Activated T-helper 2 cell treated with anti-CD3 and anti-CD28 coated beads, Interferon-gamma antibody, Interleukin-2, Interleukin-4, amounts not matched to agents 10 μg/mL and 5 μg/mL and 100 μg/mL, durations not matched to agents 14 hours and 24 hours and 36 hours (primary cell): ENCODE measurements at regions of chr6 and their contacts with region 1.

Region 1: GRCh38 chr6:144215932-144216667 is 65.8 kb downstream of the STX11 start:
- DNase-seq: peak; percentile 90
- H3K4me3 Mint-ChIP-seq: peak overlapping the region; percentile 89
- H3K27ac Mint-ChIP-seq: peak overlapping the region; percentile 98
- H3K4me1 Mint-ChIP-seq: peaks cover 28% of the 10 kb centered on the region
- H3K27me3 Mint-ChIP-seq: peaks cover under 1% of the 10 kb centered on the region

Region 2: DNA sequence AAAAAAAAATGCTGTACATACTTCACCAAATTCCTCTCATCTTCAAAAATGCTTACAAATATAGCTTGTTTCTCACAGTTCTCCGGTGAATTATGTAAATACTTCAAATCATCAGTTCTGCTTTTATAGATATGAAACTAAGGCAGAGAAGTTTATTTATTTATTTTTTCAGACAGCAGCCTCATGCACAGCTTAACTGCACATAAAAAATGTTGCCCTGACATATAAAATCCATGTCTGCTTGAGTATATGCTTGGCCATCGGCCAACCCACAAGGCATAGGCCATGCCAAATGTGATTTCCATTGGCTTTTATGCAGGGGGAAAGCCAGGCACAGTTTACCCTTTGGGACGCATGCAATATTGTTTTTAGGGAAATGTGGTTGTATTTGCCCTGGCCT is 595.7 kb before region 1 on chr6:
- intact Hi-C with region 1: no loop called
- DNase-seq: no peak
- H3K4me3 Mint-ChIP-seq: no peak overlapping the region
- H3K27ac Mint-ChIP-seq: no peak overlapping the region
- H3K4me1 Mint-ChIP-seq: peaks cover 21% of the 10 kb centered on the region
- H3K27me3 Mint-ChIP-seq: peaks cover 6% of the 10 kb centered on the region

Region 3: DNA sequence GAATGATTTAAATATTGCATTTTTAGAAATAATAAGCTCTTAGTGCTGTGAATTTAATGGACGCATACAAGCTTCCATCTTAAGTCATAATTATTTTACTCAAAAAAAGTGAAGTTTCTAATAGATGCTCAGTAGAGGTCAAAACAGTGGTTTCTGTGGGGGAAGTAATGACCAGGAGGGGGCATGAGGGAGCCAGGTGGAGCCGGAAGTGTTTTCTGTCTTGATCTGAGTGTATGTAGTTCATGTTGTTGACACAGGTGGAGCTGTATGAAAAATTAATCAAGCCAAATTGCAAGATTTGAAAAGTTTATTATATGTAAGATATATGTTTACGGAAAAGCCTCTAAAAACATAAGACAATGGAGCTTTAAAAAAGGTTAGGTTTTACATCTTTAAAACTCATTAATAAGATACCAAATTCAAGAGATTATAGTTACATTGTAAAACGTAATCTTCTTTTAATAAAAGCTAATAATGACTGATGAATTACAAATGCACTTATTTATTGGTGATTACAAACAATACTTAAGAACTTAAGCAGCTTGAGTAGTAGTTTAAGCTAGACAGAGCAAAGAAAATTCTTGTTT is 276.0 kb before region 1 on chr6:
- intact Hi-C with region 1: loop called (anchors 5 kb)
- DNase-seq: peak; percentile 47
- H3K4me3 Mint-ChIP-seq: no peak overlapping the region
- H3K27ac Mint-ChIP-seq: no peak overlapping the region
- H3K4me1 Mint-ChIP-seq: peaks cover 6% of the 10 kb centered on the region
- H3K27me3 Mint-ChIP-seq: peaks cover 3% of the 10 kb centered on the region

Region 4: DNA sequence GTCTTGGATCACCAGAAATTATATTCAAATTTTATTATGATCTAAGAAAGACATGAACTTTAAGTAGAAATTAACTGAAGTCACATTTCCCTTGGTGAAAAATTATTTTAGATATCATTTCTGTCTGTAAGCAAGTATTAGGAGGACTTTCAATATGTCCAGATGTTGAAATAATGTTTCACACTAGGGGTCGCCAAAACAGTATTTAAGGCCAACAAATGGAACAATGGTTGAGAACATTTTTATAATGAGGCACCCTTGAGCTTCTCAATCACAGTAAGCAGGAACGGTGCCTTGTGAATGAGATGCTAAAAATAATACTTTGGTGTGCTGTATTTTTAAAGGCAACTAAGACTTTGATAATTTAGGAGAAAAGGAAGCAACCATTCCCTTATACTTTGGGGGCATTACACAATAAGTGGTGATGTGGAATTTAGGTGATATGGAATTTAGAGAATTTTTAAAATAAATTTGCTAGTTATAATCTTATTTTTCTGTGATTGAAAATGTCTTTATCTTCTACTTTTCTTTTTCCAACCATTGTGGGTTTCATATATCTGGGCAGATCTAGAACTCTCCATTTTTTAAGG is 111.1 kb before region 1 on chr6:
- intact Hi-C with region 1: loop called (anchors 1 kb)
- DNase-seq: no peak
- H3K4me3 Mint-ChIP-seq: no peak overlapping the region
- H3K27ac Mint-ChIP-seq: no peak overlapping the region
- H3K4me1 Mint-ChIP-seq: peaks cover 9% of the 10 kb centered on the region
- H3K27me3 Mint-ChIP-seq: peaks cover 6% of the 10 kb centered on the region

Region 5: DNA sequence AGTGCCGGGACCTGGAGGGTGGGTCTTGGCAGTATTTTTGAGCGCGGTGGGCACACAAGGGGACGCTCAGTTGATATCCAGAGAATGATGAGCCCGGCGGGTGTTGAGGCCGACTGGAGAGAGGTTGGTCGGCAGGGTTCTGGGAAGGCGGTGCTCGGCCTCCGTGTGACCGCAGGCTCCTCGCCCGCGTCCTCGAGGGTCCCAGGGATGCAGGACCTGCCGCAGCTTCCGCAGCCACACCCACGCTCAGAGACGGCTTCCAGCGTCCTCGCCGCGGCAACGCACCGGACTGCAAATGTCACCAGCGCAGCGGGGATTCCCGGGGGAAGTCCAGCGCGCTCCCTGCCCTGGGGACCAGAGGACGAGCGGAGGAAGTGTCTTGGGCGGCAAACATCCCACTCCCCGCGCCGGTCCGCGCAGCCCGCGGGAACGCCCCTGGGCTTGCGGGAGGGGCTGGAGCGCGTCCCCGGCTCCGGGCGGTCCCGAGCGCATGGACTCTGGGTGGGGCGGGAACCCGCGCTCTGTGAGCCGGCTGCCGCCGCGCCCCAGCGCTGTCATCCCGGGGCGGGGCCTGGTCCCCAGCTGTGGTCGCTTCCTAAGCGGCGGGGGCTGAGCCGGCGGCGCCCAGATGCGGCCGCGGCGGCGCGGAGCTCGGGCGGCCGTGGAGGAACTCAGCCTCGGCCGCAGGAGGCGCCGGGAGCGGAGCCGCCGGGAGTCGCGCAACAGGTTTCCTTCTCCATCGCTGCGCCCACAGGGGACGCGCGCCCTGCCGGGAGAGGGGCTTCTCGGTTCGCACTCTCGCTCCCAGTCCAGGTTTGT is 66.0 kb before region 1 on chr6 and contains the start of gene STX11:
- intact Hi-C with region 1: loop called (anchors 1 kb)
- DNase-seq: peak; percentile 79
- H3K4me3 Mint-ChIP-seq: peak within 1 kb of the TSS; percentile 84
- H3K27ac Mint-ChIP-seq: peak within 1 kb of the TSS; percentile 94
- H3K4me1 Mint-ChIP-seq: peaks cover 49% of the 10 kb centered on the region
- H3K27me3 Mint-ChIP-seq: no peaks in the 10 kb centered on the region
- total RNA-seq, gene STX11: 19.2 and 19.7 TPM in 2 replicates

Region 6: GRCh38 chr6:144195679-144196270 is 20.3 kb before region 1 on chr6:
- intact Hi-C with region 1: no loop called
- DNase-seq: no peak
- H3K4me3 Mint-ChIP-seq: no peak overlapping the region
- H3K27ac Mint-ChIP-seq: no peak overlapping the region
- H3K4me1 Mint-ChIP-seq: peaks cover 2% of the 10 kb centered on the region
- H3K27me3 Mint-ChIP-seq: peaks cover 1% of the 10 kb centered on the region

Region 7: GRCh38 chr6:144284783-144285547 is 68.9 kb after region 1 on chr6 and contains the start of gene UTRN:
- intact Hi-C with region 1: loop called (anchors 2 kb)
- DNase-seq: peak; percentile 41
- H3K4me3 Mint-ChIP-seq: peak within 1 kb of the TSS; percentile 91
- H3K27ac Mint-ChIP-seq: peak within 1 kb of the TSS; percentile 78
- H3K4me1 Mint-ChIP-seq: peaks cover 11% of the 10 kb centered on the region
- H3K27me3 Mint-ChIP-seq: peaks cover 21% of the 10 kb centered on the region
- total RNA-seq, gene UTRN: 48.6 and 54.6 TPM in 2 replicates

Region 8: DNA sequence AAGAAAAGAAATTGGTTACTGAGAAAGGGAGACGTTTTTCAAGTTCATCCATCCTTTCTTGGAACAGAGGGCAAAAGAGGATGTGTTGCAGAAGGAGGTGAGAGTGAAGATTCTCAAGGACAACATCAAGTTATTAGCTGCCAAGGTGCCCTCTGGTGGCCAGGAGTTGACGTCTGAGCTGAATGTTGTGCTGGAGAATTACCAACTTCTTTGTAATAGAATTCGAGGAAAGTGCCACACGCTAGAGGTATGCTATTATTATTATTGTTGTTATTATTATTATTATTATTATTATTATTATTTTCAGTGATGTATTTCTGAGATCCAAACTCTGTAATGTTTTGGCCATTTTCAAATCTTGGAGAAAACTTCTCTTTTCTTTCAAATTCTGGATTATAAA is 266.0 kb after region 1 on chr6:
- intact Hi-C with region 1: loop called (anchors 5 kb)
- DNase-seq: peak; percentile 49
- H3K4me3 Mint-ChIP-seq: no peak overlapping the region
- H3K27ac Mint-ChIP-seq: no peak overlapping the region
- H3K4me1 Mint-ChIP-seq: peaks cover 10% of the 10 kb centered on the region
- H3K27me3 Mint-ChIP-seq: no peaks in the 10 kb centered on the region